Ascending aorta (tissue), 2 donors: ENCODE measurements at regions of chr10 and their contacts with region 1.

Region 1: DNA sequence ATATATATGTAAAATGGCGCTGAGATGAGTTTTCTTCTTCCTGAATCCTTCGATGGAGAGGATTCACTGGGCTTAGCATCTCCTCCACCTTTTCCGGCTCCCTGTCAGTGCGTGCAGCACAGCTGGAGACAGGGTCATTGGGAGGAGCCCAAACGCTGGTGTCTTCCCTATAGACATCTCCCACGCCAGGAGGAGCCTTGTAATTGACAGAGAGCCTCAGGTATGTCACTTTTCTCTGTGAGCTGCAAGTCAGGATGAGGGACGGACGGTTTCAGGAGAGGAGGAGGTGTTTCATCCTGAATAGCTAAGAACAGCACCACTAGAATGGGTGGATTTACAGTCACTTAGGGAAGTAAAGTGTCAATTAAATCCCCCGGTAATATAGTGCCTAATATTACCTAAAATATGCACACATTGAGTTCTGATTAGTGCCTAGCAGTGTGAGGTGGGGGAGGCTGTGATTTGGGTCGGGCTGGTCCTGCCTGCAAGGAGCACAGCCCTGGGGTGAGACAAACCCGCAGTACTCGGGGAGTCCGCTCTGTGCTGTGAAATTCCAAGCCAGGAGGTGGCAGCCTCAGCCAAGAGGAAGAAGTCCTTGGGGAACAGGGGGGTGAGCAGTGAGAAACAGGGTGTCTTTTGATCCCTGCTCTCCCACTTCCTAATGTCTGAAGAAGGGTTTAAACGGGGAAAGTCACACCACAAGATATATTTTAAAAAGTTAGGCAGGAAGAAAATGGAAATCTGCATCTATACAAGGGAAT is 28.2 kb downstream of the IL15RA start:
- DNase-seq: peak; percentile 32 to 84
- H3K4me3 ChIP-seq: no peak overlapping the region
- H3K27ac ChIP-seq: peak overlapping the region in 1 of 2 donors; percentile 67
- H3K4me1 ChIP-seq: peaks cover 20 to 47% of the 10 kb centered on the region in 2 donors
- H3K27me3 ChIP-seq: no peaks in the 10 kb centered on the region
- CTCF ChIP-seq: peak; percentile 43 to 73 (median 66)

Region 2: DNA sequence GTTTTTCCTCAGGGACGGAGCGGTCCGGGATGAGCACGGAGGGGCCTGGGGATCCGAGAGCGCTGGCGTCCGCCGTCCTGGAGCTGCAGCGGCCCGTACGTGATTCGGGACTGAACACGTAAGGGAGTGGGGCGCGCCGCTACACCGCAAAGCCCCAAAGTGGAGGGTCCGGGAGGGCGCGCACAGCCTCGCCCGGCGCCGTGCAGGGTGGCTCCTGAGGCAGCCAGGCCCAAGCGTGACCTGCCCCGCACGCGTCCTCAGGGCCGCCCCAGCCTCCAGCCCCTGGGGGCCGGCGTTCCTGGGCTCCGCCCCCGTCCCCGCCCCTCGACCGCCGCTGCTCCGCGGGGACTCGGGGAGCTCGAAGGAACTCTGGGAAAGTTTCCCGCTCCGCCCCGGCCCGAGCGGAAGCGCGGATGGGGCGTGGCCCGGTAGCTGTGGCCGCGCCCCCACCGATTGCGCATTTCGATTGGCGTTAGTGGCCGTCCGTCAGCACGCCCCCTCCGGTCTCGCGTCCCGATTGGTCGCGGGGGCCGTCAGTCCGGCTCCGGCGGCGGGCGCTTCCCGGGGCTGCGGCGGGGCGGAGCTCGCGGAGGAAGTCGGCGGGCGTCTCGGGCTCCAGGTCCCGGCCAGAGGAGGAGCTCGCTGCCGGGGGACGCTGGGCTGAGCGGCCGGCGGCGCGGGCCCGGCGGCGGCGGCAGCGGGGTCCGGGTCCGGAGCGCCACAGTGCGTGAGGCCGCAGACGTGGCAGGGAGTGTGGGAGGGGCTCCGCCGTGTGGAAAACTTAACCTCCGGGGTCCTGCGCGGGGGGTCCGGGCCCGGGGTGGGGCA is 59.3 kb before region 1 on chr10 and contains the starts of genes ANKRD16 and FBH1:
- intact Hi-C with region 1: loop called (anchors 2 kb)
- DNase-seq: peak; percentile 86 to 99
- H3K4me3 ChIP-seq: peak within 1 kb of the TSS; percentile 80 to 95
- H3K27ac ChIP-seq: peak within 1 kb of the TSS; percentile 84 to 85
- H3K4me1 ChIP-seq: peaks cover 2 to 25% of the 10 kb centered on the region in 2 donors
- H3K27me3 ChIP-seq: no peaks in the 10 kb centered on the region
- CTCF ChIP-seq: no peak
- total RNA-seq, gene ANKRD16: 10.4 TPM
- total RNA-seq, gene FBH1: 43.0 TPM

Region 3: GRCh38 chr10:5977471-5978229 is 28.5 kb after region 1 on chr10 and contains the start of gene IL15RA:
- intact Hi-C with region 1: loop called (anchors 1 kb)
- DNase-seq: peak in 1 of 2 donors; percentile 83
- H3K4me3 ChIP-seq: peak within 1 kb of the TSS; percentile 94 to 99
- H3K27ac ChIP-seq: peak within 1 kb of the TSS; percentile 90 to 98
- H3K4me1 ChIP-seq: peaks cover 0 to 14% of the 10 kb centered on the region in 2 donors
- H3K27me3 ChIP-seq: no peaks in the 10 kb centered on the region
- CTCF ChIP-seq: peak; percentile 4 to 40 (median 36)
- total RNA-seq, gene IL15RA: 24.8 TPM

Region 4: GRCh38 chr10:6014241-6014761 is 65.1 kb after region 1 on chr10:
- intact Hi-C with region 1: loop called (anchors 5 kb)
- DNase-seq: peak in 1 of 2 donors; percentile 73
- H3K4me3 ChIP-seq: no peak overlapping the region
- H3K27ac ChIP-seq: no peak overlapping the region
- H3K4me1 ChIP-seq: no peaks in the 10 kb centered on the region
- H3K27me3 ChIP-seq: no peaks in the 10 kb centered on the region
- CTCF ChIP-seq: peak; percentile 56 to 76 (median 58)

Region 5: GRCh38 chr10:6088721-6089390 is 139.7 kb after region 1 on chr10 and contains the start of gene RBM17:
- intact Hi-C with region 1: loop called (anchors 1 kb)
- DNase-seq: peak; percentile 86 to 99
- H3K4me3 ChIP-seq: peak within 1 kb of the TSS; percentile 71 to 96
- H3K27ac ChIP-seq: peak within 1 kb of the TSS; percentile 71 to 84
- H3K4me1 ChIP-seq: peaks cover 4 to 27% of the 10 kb centered on the region in 2 donors
- H3K27me3 ChIP-seq: no peaks in the 10 kb centered on the region
- CTCF ChIP-seq: peak; percentile 99 to 100 (median 100)
- total RNA-seq, gene RBM17: 22.7 TPM

Region 6: GRCh38 chr10:6275022-6275997 is 326.1 kb after region 1 on chr10:
- intact Hi-C with region 1: loop called (anchors 10 kb)
- DNase-seq: peak; percentile 99
- H3K4me3 ChIP-seq: peak overlapping the region; percentile 23 to 32
- H3K27ac ChIP-seq: peak overlapping the region; percentile 95 to 97
- H3K4me1 ChIP-seq: peaks cover 10 to 47% of the 10 kb centered on the region in 2 donors
- H3K27me3 ChIP-seq: no peaks in the 10 kb centered on the region
- CTCF ChIP-seq: no peak

Region 7: DNA sequence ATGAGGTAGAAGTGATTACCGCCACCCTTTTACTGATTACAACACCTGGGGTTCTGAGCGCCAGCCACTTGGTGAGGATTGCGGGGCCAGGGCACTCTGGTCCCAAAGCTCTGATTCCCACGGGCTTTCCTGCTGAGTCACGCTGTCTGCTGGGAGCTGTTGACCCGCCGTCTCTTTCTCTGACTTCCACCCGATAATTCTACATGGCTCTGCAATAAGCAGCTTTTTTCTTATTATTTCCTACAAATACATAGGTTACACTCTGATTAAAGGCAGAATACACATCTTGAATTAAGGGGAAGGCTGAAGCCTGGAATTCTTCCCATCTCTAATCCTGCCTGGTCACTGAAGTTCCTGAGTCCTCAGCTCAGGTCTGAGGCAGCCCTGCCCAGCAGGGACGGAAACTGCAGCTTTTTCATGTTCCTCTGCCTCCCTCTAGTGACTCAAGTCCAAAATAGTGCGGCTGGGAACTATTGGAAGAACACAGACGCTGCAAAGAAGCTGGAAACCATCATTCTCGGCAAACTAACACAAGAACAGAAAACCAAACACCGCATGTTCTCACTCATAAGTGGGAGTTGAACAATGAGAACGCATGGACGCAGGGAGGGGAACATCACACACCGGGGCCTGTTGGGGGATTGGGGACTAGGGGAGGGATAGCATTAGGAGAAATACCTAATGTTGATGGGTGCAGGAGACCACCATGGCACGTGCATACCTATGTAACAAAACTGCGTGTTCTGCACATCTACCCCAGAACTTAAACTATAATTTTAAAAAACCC is 452.6 kb after region 1 on chr10:
- intact Hi-C with region 1: loop called (anchors 5 kb)
- DNase-seq: peak; percentile 32 to 88
- H3K4me3 ChIP-seq: peak overlapping the region; percentile 35 to 55
- H3K27ac ChIP-seq: peak overlapping the region; percentile 48 to 71
- H3K4me1 ChIP-seq: peaks cover 0 to 13% of the 10 kb centered on the region in 2 donors
- H3K27me3 ChIP-seq: no peaks in the 10 kb centered on the region
- CTCF ChIP-seq: peak; percentile 68 to 82 (median 77)